Heart left ventricle (tissue), 16 donors: ENCODE measurements at regions of chr16 and their contacts with region 1.

Region 1: GRCh38 chr16:84084570-84085270 is 32.0 kb downstream of the MBTPS1 start:
- DNase-seq: peak in 4 of 5 donors; percentile 39 to 71 (median 64)
- ATAC-seq: peak in 2 of 4 donors; percentile 31 to 38
- H3K4me3 ChIP-seq: no peak overlapping the region
- H3K27ac ChIP-seq: peak overlapping the region in 8 of 12 donors; percentile 17 to 86 (median 64)
- H3K4me1 ChIP-seq: peaks cover 0 to 54% (median 17%) of the 10 kb centered on the region in 12 donors
- H3K27me3 ChIP-seq: no peaks in the 10 kb centered on the region
- CTCF ChIP-seq: peak; percentile 49 to 74 (median 62)
- POLR2A ChIP-seq: no peak

Region 2: DNA sequence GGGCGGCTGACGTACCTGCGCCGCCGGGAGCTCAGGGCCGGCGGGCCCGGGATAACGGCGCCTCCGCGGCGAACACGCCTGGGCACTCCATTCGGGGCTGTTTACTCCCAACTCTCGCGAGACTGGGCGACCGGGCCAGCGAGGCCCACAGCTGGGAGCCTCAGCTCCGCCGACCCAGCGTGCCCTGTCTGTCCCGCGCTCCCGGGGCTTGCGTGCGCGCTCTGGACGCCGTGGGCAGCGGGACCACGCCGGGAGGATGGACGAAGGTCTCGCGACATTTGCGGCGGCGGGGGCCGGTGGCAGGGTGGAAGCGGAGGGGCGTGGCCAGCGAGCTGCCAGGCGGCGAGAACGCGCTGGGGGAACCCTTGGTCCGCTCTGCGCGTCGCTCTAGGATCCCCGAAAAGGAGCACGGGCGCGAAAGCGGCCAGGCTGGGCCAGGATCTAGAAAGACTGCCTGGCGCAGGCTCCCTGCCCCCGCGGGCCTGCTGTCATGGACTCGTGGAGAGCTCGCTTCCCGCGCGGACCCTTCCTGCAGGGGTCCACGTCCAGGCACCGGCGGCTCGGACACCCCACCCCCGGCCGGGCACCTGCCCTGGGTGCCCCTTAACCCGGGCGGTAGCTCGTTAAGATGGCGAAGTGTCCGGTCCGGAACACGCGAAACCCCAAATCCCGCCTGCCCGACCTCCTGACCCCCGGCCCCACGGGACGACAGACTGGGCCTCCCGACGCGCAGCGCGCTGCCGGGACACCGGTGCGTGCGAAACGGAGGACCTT is 32.2 kb after region 1 on chr16 and contains the start of gene MBTPS1:
- intact Hi-C with region 1: loop called in 1 of 10 experiments (anchors 2 kb)
- DNase-seq: peak; percentile 99 to 100 (median 99)
- ATAC-seq: peak; percentile 97 to 99 (median 98)
- H3K4me3 ChIP-seq: peak within 1 kb of the TSS; percentile 49 to 100 (median 84)
- H3K27ac ChIP-seq: peak within 1 kb of the TSS; percentile 80 to 99 (median 92)
- H3K4me1 ChIP-seq: peaks cover 0 to 29% (median 19%) of the 10 kb centered on the region in 12 donors
- H3K27me3 ChIP-seq: no peaks in the 10 kb centered on the region
- CTCF ChIP-seq: peak in 2 of 12 donors; percentile 1 to 4
- POLR2A ChIP-seq: peak in 1 of 2 donors; percentile 91
- total RNA-seq, gene MBTPS1: 57.3 to 91.4 (median 68.6) TPM

Region 3: GRCh38 chr16:84144859-84145639 is 60.3 kb after region 1 on chr16 and contains the starts of genes DNAAF1 and HSDL1:
- intact Hi-C with region 1: loop called in 3 of 10 experiments (anchors 5 to 10 kb)
- DNase-seq: peak; percentile 90 to 96 (median 91)
- ATAC-seq: peak; percentile 84 to 96 (median 94)
- H3K4me3 ChIP-seq: peak within 1 kb of the TSS; percentile 78 to 99 (median 94)
- H3K27ac ChIP-seq: peak within 1 kb of the TSS; percentile 50 to 96 (median 80)
- H3K4me1 ChIP-seq: peaks cover 0 to 26% (median 10%) of the 10 kb centered on the region in 12 donors
- H3K27me3 ChIP-seq: peaks cover 0 to 2% (median 0%) of the 10 kb centered on the region in 9 donors
- CTCF ChIP-seq: peak in 4 of 12 donors; percentile 3 to 28 (median 15)
- POLR2A ChIP-seq: peak; percentile 76 to 82
- total RNA-seq, gene DNAAF1: 0.20 to 0.32 (median 0.25) TPM in 3 of 9 donors, not detected in the others
- total RNA-seq, gene HSDL1: 15.8 to 46.8 (median 23.4) TPM

Region 4: DNA sequence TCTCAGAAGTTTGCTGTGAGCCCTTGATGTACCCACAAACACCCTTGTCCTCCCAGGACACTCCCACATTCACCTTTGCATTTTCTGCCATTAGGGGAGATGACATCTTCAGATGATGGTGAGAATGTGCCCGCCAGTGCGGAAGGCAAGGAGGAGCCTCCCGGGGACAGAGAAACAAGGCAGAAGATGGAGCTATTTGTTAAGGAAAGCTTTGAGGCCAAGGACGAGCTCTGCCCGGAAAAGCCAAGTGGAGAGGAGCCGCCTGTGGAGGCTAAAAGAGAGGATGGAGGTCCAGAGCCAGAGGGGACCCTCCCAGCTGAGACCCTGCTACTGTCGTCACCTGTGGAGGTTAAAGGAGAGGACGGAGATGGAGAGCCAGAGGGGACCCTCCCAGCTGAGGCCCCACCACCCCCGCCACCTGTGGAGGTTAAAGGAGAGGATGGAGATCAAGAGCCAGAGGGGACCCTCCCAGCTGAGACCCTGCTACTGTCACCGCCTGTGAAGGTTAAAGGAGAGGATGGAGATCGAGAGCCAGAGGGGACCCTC is 85.1 kb after region 1 on chr16:
- intact Hi-C with region 1: loop called in 4 of 10 experiments (anchors 5 kb)
- DNase-seq: no peak
- ATAC-seq: no peak
- H3K4me3 ChIP-seq: no peak overlapping the region
- H3K27ac ChIP-seq: no peak overlapping the region
- H3K4me1 ChIP-seq: peaks cover 0 to 3% (median 0%) of the 10 kb centered on the region in 12 donors
- H3K27me3 ChIP-seq: peaks cover 0 to 5% (median 0%) of the 10 kb centered on the region in 9 donors
- CTCF ChIP-seq: no peak
- POLR2A ChIP-seq: no peak

Region 5: DNA sequence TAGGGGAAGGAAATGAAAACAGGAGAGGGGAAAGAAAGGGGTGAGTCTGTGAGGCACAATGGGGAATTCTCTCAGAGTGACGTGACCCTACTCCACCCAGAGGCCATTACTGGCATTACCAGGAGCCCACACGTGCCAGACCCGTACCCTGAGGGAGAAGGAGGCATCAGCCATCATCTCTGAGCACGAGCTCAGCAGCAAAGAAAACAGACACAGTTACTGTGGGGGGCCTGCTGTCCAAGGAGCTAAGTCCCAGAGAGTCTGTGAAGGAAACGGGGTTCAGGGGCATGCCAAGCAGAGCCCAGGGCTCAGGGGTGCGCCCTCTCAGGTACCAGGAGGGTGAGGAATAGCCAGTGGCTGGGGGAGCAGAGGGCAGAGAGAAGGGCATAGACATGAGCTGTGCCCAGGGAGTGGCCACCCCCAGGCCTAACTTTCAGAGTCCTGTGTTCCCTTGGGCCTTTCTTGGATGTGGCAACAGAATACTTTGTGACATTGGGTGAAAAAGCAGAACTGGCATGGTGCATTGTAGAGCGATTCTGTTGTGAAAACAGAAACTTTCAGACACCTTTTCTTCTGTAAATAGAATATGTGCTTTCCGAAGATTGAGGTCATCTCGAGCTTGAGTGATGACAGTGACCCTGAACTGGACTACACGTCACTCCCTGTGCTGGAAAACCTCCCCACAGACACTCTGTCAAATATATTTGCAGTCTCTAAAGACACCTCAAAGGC is 90.8 kb after region 1 on chr16:
- intact Hi-C with region 1: loop called in 6 of 10 experiments (anchors 2 to 10 kb)
- DNase-seq: peak in 2 of 5 donors; percentile 55 to 57
- ATAC-seq: peak; percentile 43 to 70 (median 52)
- H3K4me3 ChIP-seq: no peak overlapping the region
- H3K27ac ChIP-seq: peak overlapping the region in 9 of 12 donors; percentile 8 to 85 (median 83)
- H3K4me1 ChIP-seq: peaks cover 7 to 55% (median 36%) of the 10 kb centered on the region in 12 donors
- H3K27me3 ChIP-seq: no peaks in the 10 kb centered on the region
- CTCF ChIP-seq: peak in 10 of 12 donors; percentile 34 to 85 (median 68)
- POLR2A ChIP-seq: no peak

Region 6: DNA sequence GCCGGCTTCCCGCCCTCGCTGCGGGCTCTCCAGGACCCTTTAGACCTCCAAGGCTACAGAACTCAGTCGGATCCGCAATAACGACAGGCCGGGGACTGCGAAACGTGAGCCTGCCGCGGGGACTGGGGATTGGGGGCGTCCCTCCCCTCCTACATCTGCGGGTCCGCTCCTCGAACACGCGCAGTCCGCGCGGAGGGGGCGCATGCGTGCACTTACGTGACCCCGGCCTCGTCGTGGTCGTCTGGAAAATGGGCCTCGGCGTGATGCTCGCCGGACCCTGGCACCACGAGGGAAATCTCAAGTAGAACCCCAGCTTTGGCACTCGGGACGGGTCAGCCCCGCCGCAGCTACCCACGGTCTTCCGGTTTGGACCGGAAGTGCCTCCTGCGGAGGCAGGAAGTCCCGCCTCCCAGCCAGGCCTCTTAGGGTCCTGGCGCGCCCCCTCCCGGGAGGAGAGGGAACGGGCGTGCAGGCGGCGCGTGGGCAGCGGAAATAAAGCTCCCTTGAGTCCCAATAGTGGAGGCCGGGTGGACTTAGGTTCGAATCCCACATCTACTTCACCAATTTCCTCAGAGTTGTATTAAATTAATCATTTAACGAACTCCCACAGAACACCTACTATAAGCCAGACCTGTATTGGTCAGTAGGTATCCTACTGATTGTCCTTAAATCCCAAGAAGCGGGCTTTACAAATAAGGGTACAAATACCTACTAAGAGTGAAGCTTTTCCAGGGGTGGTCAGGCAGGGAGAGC is 102.1 kb after region 1 on chr16 and contains the start of gene TAF1C:
- intact Hi-C with region 1: loop called in 5 of 10 experiments (anchors 1 to 10 kb)
- DNase-seq: peak; percentile 90 to 95 (median 92)
- ATAC-seq: peak; percentile 82 to 95 (median 94)
- H3K4me3 ChIP-seq: peak within 1 kb of the TSS; percentile 62 to 100 (median 87)
- H3K27ac ChIP-seq: peak within 1 kb of the TSS; percentile 56 to 90 (median 82)
- H3K4me1 ChIP-seq: peaks cover 0 to 45% (median 16%) of the 10 kb centered on the region in 12 donors
- H3K27me3 ChIP-seq: no peaks in the 10 kb centered on the region
- CTCF ChIP-seq: peak in 11 of 12 donors; percentile 92 to 99 (median 98)
- POLR2A ChIP-seq: peak in 1 of 2 donors; percentile 46
- total RNA-seq, gene TAF1C: 16.3 to 24.3 (median 21.8) TPM

Region 7: DNA sequence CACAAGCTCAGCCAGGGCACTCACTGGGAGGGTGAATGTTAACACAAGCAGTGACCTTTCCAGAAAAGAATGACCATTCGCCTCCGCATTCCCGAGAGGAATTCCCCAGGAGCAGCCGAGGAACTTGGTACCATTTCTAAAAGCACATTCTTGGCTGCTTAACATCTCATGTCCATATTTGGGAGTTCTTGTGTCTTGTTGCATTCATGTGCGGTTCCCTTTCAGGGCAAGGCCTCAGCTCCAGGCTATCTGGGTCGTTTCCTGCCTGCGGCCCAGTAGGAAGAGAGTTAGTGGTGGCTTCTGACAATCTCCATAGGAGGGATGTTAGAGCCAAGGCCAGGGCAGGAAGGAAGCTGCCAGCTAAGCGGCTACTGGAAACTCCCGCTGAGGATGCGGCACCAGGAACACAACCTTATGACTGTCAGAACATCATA is 447.6 kb after region 1 on chr16:
- intact Hi-C with region 1: no loop called
- DNase-seq: peak; percentile 52 to 76 (median 71)
- ATAC-seq: peak; percentile 63 to 93 (median 91)
- H3K4me3 ChIP-seq: no peak overlapping the region
- H3K27ac ChIP-seq: peak overlapping the region; percentile 46 to 84 (median 62)
- H3K4me1 ChIP-seq: peaks cover 12 to 42% (median 30%) of the 10 kb centered on the region in 12 donors
- H3K27me3 ChIP-seq: no peaks in the 10 kb centered on the region
- CTCF ChIP-seq: no peak
- POLR2A ChIP-seq: no peak